Activated B cell treated with CpG ODN at 0.5 μM for 24 hours (primary cell): ENCODE measurements at regions of chr12 and their contacts with region 1.

Region 1: GRCh38 chr12:111405149-111405860 is 418 bp upstream of the SH2B3 start:
- DNase-seq: peak; percentile 99
- ATAC-seq: peak; percentile 71
- H3K4me3 Mint-ChIP-seq: peak overlapping the region; percentile 91
- H3K27ac Mint-ChIP-seq: peak overlapping the region; percentile 97
- H3K4me1 Mint-ChIP-seq: peaks cover 64% of the 10 kb centered on the region
- H3K27me3 Mint-ChIP-seq: no peaks in the 10 kb centered on the region
- CTCF ChIP-seq: no peak

Region 2: DNA sequence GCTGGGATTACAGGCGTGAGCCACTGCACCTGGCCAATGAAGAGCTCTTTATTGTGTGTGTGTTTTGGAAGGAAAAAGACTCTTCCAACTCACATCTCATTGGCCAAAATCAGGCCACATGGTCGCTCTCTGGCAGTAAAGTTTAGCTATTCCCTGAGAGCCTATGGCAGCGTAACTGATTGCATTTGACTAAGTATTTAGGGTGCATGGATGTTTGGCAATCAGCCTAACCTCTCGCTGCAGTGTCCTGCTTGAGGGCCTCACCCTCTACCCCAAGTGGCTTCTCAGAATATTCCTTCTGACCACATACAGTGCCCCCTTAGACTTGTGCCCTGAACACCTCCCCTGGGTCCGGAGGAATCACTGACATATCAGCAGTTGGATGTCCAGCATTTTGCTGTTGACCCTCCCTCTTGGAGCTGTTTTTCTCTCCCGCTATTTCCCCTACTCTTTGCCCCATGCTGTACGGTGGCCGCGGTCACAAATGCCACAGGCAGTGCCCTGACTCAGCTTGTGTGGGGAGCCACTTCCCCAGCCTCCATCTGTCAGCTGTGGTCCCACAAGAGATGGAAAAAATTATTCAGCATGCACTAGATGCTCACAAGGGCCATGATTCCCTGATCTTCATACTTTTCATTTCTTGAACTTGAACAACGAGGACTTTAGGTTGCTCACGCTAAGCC is 45.9 kb before region 1 on chr12:
- CTCF ChIA-PET with region 1: no interaction called
- POLR2A ChIA-PET with region 1: interaction called, 4 read pairs
- intact Hi-C with region 1: loop called (anchors 2 kb)
- DNase-seq: no peak
- ATAC-seq: no peak
- H3K4me3 Mint-ChIP-seq: no peak overlapping the region
- H3K27ac Mint-ChIP-seq: peak overlapping the region; percentile 21
- H3K4me1 Mint-ChIP-seq: peaks cover 79% of the 10 kb centered on the region
- H3K27me3 Mint-ChIP-seq: no peaks in the 10 kb centered on the region
- CTCF ChIP-seq: no peak

Region 3: DNA sequence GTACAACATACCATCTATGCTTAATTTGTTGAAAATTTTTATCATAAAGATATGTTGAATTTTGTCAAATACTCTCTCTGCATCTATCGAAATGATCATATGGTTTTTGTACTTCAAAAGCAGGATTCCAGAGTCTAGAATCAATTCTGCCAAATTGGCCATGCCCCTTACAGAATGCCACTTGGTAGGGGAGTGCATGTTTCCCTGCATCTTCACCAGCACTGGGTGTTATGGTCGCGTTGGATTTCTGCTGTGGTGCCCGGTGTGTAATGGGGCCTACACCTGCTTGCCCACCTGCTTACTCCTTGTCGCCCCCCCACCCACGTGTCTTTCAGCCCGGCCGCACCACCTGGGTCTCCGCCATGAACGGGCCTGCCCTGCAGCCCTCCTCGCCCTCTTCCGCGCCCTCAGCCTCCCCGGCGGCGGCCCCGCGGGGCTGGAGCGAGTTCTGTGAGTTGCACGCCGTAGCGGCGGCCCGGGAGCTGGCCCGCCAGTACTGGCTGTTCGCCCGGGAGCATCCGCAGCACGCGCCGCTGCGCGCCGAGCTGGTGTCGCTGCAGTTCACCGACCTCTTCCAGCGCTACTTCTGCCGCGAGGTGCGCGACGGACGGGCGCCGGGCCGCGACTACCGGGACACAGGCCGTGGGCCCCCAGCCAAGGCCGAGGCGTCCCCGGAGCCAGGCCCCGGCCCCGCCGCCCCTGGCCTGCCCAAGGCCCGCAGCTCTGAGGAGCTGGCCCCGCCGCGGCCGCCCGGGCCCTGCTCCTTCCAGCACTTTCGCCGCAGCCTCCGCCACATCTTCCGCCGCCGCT is 12.7 kb after region 1 on chr12:
- CTCF ChIA-PET with region 1: interaction called, 5 read pairs
- POLR2A ChIA-PET with region 1: interaction called, 3 read pairs
- intact Hi-C with region 1: loop called (anchors 1 kb)
- DNase-seq: no peak
- ATAC-seq: no peak
- H3K4me3 Mint-ChIP-seq: no peak overlapping the region
- H3K27ac Mint-ChIP-seq: no peak overlapping the region
- H3K4me1 Mint-ChIP-seq: peaks cover 26% of the 10 kb centered on the region
- H3K27me3 Mint-ChIP-seq: no peaks in the 10 kb centered on the region
- CTCF ChIP-seq: no peak

Region 4: GRCh38 chr12:111444925-111445725 is 39.8 kb after region 1 on chr12:
- CTCF ChIA-PET with region 1: interaction called, 522 read pairs
- POLR2A ChIA-PET with region 1: interaction called, 122 read pairs
- intact Hi-C with region 1: loop called (anchors 1 kb)
- DNase-seq: peak; percentile 75
- ATAC-seq: peak; percentile 93
- H3K4me3 Mint-ChIP-seq: peak overlapping the region; percentile 48
- H3K27ac Mint-ChIP-seq: peak overlapping the region; percentile 78
- H3K4me1 Mint-ChIP-seq: peaks cover 85% of the 10 kb centered on the region
- H3K27me3 Mint-ChIP-seq: no peaks in the 10 kb centered on the region
- CTCF ChIP-seq: no peak

Region 5: GRCh38 chr12:111529424-111530368 is 124.4 kb after region 1 on chr12:
- CTCF ChIA-PET with region 1: interaction called, 11 read pairs
- POLR2A ChIA-PET with region 1: interaction called, 6 read pairs
- intact Hi-C with region 1: no loop called
- DNase-seq: peak; percentile 41
- ATAC-seq: peak; percentile 86
- H3K4me3 Mint-ChIP-seq: no peak overlapping the region
- H3K27ac Mint-ChIP-seq: no peak overlapping the region
- H3K4me1 Mint-ChIP-seq: no peaks in the 10 kb centered on the region
- H3K27me3 Mint-ChIP-seq: no peaks in the 10 kb centered on the region
- CTCF ChIP-seq: no peak

Region 6: GRCh38 chr12:112946236-112947000 is 1541.1 kb after region 1 on chr12:
- CTCF ChIA-PET with region 1: no interaction called
- POLR2A ChIA-PET with region 1: interaction called, 12 read pairs
- intact Hi-C with region 1: no loop called
- DNase-seq: no peak
- ATAC-seq: no peak
- H3K4me3 Mint-ChIP-seq: no peak overlapping the region
- H3K27ac Mint-ChIP-seq: no peak overlapping the region
- H3K4me1 Mint-ChIP-seq: no peaks in the 10 kb centered on the region
- H3K27me3 Mint-ChIP-seq: no peaks in the 10 kb centered on the region
- CTCF ChIP-seq: no peak